B cell (primary cell): ENCODE measurements at regions of chrX and their contacts with region 1.

Region 1: DNA sequence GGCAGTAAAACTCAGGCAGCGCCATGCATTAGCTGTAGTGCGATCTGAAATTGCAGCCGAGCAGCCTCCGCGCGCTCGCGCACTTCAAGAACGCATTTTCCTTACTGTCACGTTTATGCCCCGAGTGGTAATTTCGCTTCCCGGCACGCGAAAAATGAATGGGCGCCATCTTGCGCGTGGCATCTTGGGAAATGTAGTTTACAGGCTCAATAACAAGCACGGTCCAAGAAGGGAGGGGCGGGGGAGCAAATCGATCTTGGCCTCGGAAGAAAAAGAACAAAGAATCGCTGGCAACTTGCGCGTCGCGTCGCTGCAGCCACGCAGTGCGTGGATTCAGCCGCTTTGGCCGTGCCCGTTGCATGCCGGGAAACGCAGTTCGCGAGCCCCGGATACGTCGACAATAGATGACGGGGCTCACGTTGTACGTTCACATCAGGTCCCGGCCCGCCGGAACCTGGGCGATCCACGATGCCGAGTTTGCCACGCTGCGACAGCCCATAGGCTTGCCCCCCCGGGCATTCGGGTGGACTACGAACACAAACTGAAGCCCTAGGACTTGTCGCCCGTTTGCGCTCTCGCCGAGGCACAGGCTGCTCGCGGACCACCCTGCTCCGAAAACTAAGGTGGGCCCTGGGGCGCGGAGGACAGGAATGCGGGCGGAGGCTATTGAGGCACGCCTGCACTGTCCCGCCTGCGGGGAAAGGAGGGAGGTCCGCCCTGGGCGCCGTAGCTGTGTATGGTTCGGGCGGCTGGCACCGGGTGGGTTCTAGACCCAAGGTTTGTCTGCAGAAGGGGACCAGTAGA is at the start of gene FTSJ1:
- DNase-seq: peak; percentile 94
- ATAC-seq: peak; percentile 87
- H3K4me3 ChIP-seq: peak within 1 kb of the TSS; percentile 70 to 83 (median 76)
- H3K4me3 Mint-ChIP-seq: peak within 1 kb of the TSS; percentile 86
- H3K27ac ChIP-seq: peak within 1 kb of the TSS; percentile 59 to 78
- H3K27ac Mint-ChIP-seq: peak within 1 kb of the TSS; percentile 78
- H3K4me1 ChIP-seq: peaks cover 4 to 19% of the 10 kb centered on the region in 2 donors
- H3K4me1 Mint-ChIP-seq: peaks cover 26% of the 10 kb centered on the region
- H3K27me3 ChIP-seq: no peaks in the 10 kb centered on the region
- H3K27me3 Mint-ChIP-seq: no peaks in the 10 kb centered on the region
- CTCF ChIP-seq: no peak
- total RNA-seq, gene FTSJ1: 36.6 and 37.7 TPM in 2 replicates

Region 2: DNA sequence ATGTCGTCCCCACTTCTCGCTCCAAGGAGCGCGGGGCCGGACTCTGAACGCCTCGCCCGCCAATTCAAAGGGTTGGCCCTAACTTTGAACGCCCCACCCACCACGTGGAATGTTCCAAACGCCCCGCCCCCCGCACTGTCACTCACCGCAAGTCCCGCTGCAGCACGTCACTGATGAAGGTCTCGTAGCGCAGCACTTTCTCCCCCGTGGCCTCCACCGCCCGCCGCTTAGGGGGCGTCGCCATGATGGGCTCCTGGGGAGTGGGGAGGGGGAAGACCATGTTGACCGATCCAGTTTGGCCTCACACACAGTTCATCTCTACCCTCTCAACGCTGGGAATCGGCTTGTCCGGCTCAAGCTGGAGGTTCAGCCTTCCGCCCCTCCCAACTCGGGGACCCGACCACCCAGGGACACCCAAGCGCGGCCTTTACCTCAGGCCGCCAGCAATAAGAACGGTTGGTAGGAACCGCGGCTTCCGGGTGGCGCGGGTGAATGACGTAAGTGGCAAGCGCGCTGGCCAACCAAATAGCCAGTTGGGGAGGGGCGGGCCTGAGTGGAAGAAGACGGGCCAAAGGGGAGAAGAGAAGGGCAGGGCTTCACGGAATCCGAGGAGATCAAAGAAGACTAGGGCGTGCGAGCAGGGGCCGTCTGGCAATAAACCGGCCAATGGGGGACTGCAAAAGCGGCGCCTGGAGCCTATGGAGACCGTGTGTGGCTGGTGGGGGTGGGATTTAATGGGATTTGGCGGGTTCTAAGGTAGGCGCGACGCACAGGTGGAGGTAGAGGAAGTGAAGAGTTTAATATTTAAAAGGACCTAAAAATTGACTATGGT is 817.1 kb before region 1 on chrX and contains the start of gene UXT:
- CTCF ChIA-PET with region 1: interaction called, 3 read pairs
- POLR2A ChIA-PET with region 1: no interaction called
- intact Hi-C with region 1: loop called (anchors 2 kb)
- DNase-seq: peak; percentile 94
- ATAC-seq: peak; percentile 82
- H3K4me3 ChIP-seq: peak within 1 kb of the TSS; percentile 53 to 80 (median 71)
- H3K4me3 Mint-ChIP-seq: peak within 1 kb of the TSS; percentile 95
- H3K27ac ChIP-seq: peak within 1 kb of the TSS; percentile 98
- H3K27ac Mint-ChIP-seq: peak within 1 kb of the TSS; percentile 100
- H3K4me1 ChIP-seq: peaks cover 10 to 16% of the 10 kb centered on the region in 2 donors
- H3K4me1 Mint-ChIP-seq: peaks cover 16% of the 10 kb centered on the region
- H3K27me3 ChIP-seq: no peaks in the 10 kb centered on the region
- H3K27me3 Mint-ChIP-seq: no peaks in the 10 kb centered on the region
- CTCF ChIP-seq: no peak
- total RNA-seq, gene UXT: 177 and 183 TPM in 2 replicates

Region 3: DNA sequence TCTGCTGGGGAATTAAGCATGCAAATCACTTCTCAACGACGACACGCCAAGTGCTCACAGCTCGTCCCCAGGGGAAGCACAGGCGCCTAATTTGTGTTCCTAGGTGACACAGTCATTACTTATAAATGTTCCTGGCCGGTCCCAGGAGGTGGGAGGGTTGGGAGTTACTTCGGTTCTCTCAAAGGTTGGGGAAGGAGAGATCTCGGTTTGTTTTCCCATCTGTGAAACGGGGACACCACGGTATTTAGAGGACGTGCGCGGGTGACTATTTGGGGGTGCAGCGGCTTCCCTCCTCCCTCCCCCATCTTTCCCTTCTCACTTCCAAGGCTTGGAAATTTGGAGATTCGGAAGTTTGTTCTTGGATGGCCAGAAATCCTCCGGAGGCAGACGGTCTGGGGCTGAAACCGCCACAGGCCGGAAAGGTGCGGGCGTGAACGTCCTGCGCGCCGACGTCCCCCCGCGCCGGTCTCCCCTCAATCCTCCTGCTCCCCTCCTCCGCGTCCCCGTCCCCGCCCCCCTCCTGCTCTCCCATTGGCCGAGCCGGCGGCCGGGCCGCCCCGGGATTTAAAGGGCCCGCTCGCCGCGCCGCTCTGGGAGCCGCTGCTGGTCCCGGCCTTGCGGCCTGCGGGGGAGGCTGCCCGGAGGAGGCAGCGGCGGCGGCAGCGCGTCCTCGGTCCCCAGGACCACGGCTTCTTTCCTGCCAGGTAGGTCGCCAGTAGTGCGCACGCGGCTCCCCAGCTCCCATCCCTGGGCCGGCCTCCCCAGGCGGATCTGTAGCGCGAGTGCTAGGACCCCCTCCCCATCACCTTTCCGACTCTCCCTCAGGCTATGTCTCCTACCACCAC is 32.6 kb after region 1 on chrX and contains the start of gene PORCN:
- CTCF ChIA-PET with region 1: no interaction called
- POLR2A ChIA-PET with region 1: no interaction called
- intact Hi-C with region 1: loop called (anchors 1 kb)
- DNase-seq: peak; percentile 82
- ATAC-seq: peak; percentile 92
- H3K4me3 ChIP-seq: peak within 1 kb of the TSS; percentile 58 to 82 (median 74)
- H3K4me3 Mint-ChIP-seq: peak within 1 kb of the TSS; percentile 92
- H3K27ac ChIP-seq: peak within 1 kb of the TSS; percentile 89 to 92
- H3K27ac Mint-ChIP-seq: peak within 1 kb of the TSS; percentile 96
- H3K4me1 ChIP-seq: peaks cover 3 to 13% of the 10 kb centered on the region in 2 donors
- H3K4me1 Mint-ChIP-seq: peaks cover 12% of the 10 kb centered on the region
- H3K27me3 ChIP-seq: no peaks in the 10 kb centered on the region
- H3K27me3 Mint-ChIP-seq: no peaks in the 10 kb centered on the region
- CTCF ChIP-seq: no peak
- total RNA-seq, gene PORCN: 12.8 and 13.0 TPM in 2 replicates

Region 4: GRCh38 chrX:48539345-48540027 is 63.5 kb after region 1 on chrX and contains the start of gene TBC1D25:
- CTCF ChIA-PET with region 1: no interaction called
- POLR2A ChIA-PET with region 1: interaction called, 9 read pairs
- intact Hi-C with region 1: loop called (anchors 1 kb)
- DNase-seq: peak; percentile 97
- ATAC-seq: peak; percentile 79
- H3K4me3 ChIP-seq: peak within 1 kb of the TSS in 4 of 5 experiments; percentile 66 to 76 (median 74)
- H3K4me3 Mint-ChIP-seq: peak within 1 kb of the TSS; percentile 91
- H3K27ac ChIP-seq: peak within 1 kb of the TSS; percentile 94 to 97
- H3K27ac Mint-ChIP-seq: peak within 1 kb of the TSS; percentile 97
- H3K4me1 ChIP-seq: peaks cover 10 to 18% of the 10 kb centered on the region in 2 donors
- H3K4me1 Mint-ChIP-seq: peaks cover 20% of the 10 kb centered on the region
- H3K27me3 ChIP-seq: no peaks in the 10 kb centered on the region
- H3K27me3 Mint-ChIP-seq: no peaks in the 10 kb centered on the region
- CTCF ChIP-seq: peak; percentile 50
- total RNA-seq, gene TBC1D25: 24.6 and 25.2 TPM in 2 replicates

Region 5: GRCh38 chrX:48631350-48632090 is 155.5 kb after region 1 on chrX:
- CTCF ChIA-PET with region 1: no interaction called
- POLR2A ChIA-PET with region 1: no interaction called
- intact Hi-C with region 1: no loop called
- DNase-seq: peak; percentile 79
- ATAC-seq: peak; percentile 82
- H3K4me3 ChIP-seq: peak overlapping the region in 1 of 5 experiments; percentile 8
- H3K4me3 Mint-ChIP-seq: peak overlapping the region; percentile 34
- H3K27ac ChIP-seq: peak overlapping the region in 1 of 2 donors; percentile 6
- H3K27ac Mint-ChIP-seq: peak overlapping the region; percentile 15
- H3K4me1 ChIP-seq: peaks cover 4 to 9% of the 10 kb centered on the region in 2 donors
- H3K4me1 Mint-ChIP-seq: peaks cover 8% of the 10 kb centered on the region
- H3K27me3 ChIP-seq: no peaks in the 10 kb centered on the region
- H3K27me3 Mint-ChIP-seq: no peaks in the 10 kb centered on the region
- CTCF ChIP-seq: peak; percentile 34

Region 6: GRCh38 chrX:48737213-48737938 is 261.4 kb after region 1 on chrX:
- CTCF ChIA-PET with region 1: no interaction called
- POLR2A ChIA-PET with region 1: no interaction called
- intact Hi-C with region 1: loop called (anchors 5 kb)
- DNase-seq: peak; percentile 94
- ATAC-seq: peak; percentile 98
- H3K4me3 ChIP-seq: peak overlapping the region; percentile 15 to 75 (median 67)
- H3K4me3 Mint-ChIP-seq: peak overlapping the region; percentile 98
- H3K27ac ChIP-seq: peak overlapping the region; percentile 85 to 91
- H3K27ac Mint-ChIP-seq: peak overlapping the region; percentile 96
- H3K4me1 ChIP-seq: peaks cover 0 to 15% of the 10 kb centered on the region in 2 donors
- H3K4me1 Mint-ChIP-seq: peaks cover 13% of the 10 kb centered on the region
- H3K27me3 ChIP-seq: no peaks in the 10 kb centered on the region
- H3K27me3 Mint-ChIP-seq: no peaks in the 10 kb centered on the region
- CTCF ChIP-seq: no peak

Region 7: DNA sequence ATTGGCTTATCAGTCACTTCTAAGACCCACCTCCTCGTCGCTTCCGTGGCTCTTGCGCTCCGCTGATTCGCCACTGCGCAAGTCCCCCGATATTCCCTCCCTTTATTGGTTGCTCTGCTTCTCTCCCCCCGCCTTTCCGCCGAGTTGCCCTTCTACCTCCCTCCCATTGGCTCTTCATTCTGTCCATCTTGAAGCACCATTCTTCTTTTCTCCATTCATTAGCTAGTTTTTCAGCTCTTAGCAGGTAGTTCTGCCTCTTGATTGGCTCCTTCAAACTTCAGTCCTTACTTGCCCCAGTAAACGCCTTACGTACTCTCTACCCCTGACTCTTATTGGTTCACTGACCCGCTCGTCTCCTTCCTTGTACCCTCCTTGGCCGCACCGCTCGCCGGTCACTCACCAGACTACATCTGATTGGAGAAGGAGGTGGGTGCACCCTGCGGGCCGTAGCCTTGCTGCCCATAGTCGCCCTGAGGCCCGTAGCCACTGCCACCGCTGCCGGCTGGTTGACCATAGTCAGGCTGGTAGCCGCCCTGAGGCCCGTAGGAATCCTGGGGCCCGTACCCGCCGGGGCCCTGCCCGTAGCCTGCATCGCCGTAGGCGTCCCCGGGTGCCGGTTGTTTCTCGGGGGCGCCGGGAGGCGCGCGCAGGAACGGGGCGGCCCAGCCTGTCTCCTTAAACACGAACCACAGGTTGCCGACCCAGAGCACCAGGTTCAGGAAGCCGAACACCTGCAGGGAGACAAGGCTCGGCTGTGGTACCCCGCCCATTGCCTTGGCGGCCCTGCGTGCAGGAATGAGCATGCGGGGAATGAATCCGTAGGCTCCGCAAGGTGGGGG is 715.3 kb after region 1 on chrX:
- CTCF ChIA-PET with region 1: no interaction called
- POLR2A ChIA-PET with region 1: no interaction called
- intact Hi-C with region 1: loop called (anchors 2 kb)
- DNase-seq: peak; percentile 95
- ATAC-seq: peak; percentile 84
- H3K4me3 ChIP-seq: peak overlapping the region in 4 of 5 experiments; percentile 62 to 78 (median 70)
- H3K4me3 Mint-ChIP-seq: peak overlapping the region; percentile 95
- H3K27ac ChIP-seq: peak overlapping the region; percentile 55 to 71
- H3K27ac Mint-ChIP-seq: peak overlapping the region; percentile 96
- H3K4me1 ChIP-seq: peaks cover 0 to 20% of the 10 kb centered on the region in 2 donors
- H3K4me1 Mint-ChIP-seq: peaks cover 28% of the 10 kb centered on the region
- H3K27me3 ChIP-seq: no peaks in the 10 kb centered on the region
- H3K27me3 Mint-ChIP-seq: no peaks in the 10 kb centered on the region
- CTCF ChIP-seq: no peak